Aorta (tissue), 5 donors: ENCODE measurements at regions of chr21 and their contacts with region 1.

Region 1: DNA sequence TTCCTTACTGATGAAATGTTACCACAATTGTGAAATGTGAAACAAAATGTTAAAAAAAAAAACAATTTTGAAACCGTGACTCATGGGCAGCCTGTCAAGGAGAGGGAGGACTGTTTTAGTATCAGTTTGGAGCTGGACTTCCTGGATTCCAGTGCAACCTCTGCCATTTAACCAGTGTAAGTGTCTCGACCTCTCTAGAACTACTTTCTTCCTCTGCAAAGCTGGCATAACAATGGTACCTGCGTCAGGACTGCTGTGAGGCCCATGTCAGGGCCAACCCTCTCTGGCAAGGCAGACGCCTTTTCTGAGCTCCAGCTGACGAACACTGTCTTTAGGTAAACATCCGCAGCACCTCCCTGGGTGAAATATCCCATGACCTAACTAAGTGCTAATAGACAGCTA is 20.9 kb downstream of the URB1 start:
- DNase-seq: no peak
- ATAC-seq: peak; percentile 85
- H3K4me3 ChIP-seq: no peak overlapping the region
- H3K27ac ChIP-seq: peak overlapping the region; percentile 24 to 83
- H3K4me1 ChIP-seq: peaks cover 0 to 4% of the 10 kb centered on the region in 2 donors
- H3K27me3 ChIP-seq: no peaks in the 10 kb centered on the region

Region 2: GRCh38 chr21:32336711-32337110 is 35.2 kb before region 1 on chr21:
- intact Hi-C with region 1: loop called in 1 of 2 experiments (anchors 5 kb)
- DNase-seq: no peak
- ATAC-seq: no peak
- H3K4me3 ChIP-seq: no peak overlapping the region
- H3K27ac ChIP-seq: no peak overlapping the region
- H3K4me1 ChIP-seq: no peaks in the 10 kb centered on the region
- H3K27me3 ChIP-seq: no peaks in the 10 kb centered on the region

Region 3: GRCh38 chr21:32403201-32403777 is 31.4 kb after region 1 on chr21:
- intact Hi-C with region 1: no loop called
- DNase-seq: peak in 1 of 2 donors; percentile 68
- ATAC-seq: peak; percentile 85
- H3K4me3 ChIP-seq: no peak overlapping the region
- H3K27ac ChIP-seq: no peak overlapping the region
- H3K4me1 ChIP-seq: no peaks in the 10 kb centered on the region
- H3K27me3 ChIP-seq: no peaks in the 10 kb centered on the region